Calu3 (cell line): ENCODE measurements at regions of chr9 and their contacts with region 1.

Region 1: GRCh38 chr9:124764774-124765438 is 6.2 kb downstream of the NR6A1 start:
- DNase-seq: no peak
- H3K4me3 Mint-ChIP-seq: no peak overlapping the region
- H3K27ac Mint-ChIP-seq: no peak overlapping the region
- H3K4me1 Mint-ChIP-seq: peaks cover 20% of the 10 kb centered on the region
- H3K27me3 Mint-ChIP-seq: no peaks in the 10 kb centered on the region
- CTCF ChIP-seq: no peak

Region 2: DNA sequence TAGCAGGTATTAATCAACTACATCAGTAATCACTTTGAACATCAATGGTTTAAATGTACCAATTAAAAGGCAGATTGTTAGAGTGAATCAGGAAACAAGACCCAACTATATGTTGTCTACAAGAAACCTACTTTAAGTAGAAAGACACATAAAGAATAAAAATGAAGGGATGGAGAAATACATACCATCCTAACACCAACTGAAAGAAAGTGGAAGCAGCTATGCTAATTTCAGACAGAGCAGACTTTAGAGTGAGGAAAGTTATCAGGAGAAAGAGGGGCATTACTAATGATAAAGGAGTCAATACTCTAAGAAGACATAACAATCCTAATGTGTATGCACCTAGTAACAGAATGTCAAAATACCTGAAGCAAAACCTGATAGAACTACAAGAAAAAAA is 119.6 kb before region 1 on chr9:
- CTCF ChIA-PET with region 1: no interaction called
- intact Hi-C with region 1: no loop called
- DNase-seq: no peak
- H3K4me3 Mint-ChIP-seq: no peak overlapping the region
- H3K27ac Mint-ChIP-seq: no peak overlapping the region
- H3K4me1 Mint-ChIP-seq: no peaks in the 10 kb centered on the region
- H3K27me3 Mint-ChIP-seq: no peaks in the 10 kb centered on the region
- CTCF ChIP-seq: no peak

Region 3: GRCh38 chr9:124733964-124734740 is 30.8 kb before region 1 on chr9:
- CTCF ChIA-PET with region 1: interaction called, 4 read pairs
- intact Hi-C with region 1: loop called (anchors 5 kb)
- DNase-seq: peak; percentile 55
- H3K4me3 Mint-ChIP-seq: peak overlapping the region; percentile 51
- H3K27ac Mint-ChIP-seq: peak overlapping the region; percentile 40
- H3K4me1 Mint-ChIP-seq: peaks cover 25% of the 10 kb centered on the region
- H3K27me3 Mint-ChIP-seq: no peaks in the 10 kb centered on the region
- CTCF ChIP-seq: no peak

Region 4: DNA sequence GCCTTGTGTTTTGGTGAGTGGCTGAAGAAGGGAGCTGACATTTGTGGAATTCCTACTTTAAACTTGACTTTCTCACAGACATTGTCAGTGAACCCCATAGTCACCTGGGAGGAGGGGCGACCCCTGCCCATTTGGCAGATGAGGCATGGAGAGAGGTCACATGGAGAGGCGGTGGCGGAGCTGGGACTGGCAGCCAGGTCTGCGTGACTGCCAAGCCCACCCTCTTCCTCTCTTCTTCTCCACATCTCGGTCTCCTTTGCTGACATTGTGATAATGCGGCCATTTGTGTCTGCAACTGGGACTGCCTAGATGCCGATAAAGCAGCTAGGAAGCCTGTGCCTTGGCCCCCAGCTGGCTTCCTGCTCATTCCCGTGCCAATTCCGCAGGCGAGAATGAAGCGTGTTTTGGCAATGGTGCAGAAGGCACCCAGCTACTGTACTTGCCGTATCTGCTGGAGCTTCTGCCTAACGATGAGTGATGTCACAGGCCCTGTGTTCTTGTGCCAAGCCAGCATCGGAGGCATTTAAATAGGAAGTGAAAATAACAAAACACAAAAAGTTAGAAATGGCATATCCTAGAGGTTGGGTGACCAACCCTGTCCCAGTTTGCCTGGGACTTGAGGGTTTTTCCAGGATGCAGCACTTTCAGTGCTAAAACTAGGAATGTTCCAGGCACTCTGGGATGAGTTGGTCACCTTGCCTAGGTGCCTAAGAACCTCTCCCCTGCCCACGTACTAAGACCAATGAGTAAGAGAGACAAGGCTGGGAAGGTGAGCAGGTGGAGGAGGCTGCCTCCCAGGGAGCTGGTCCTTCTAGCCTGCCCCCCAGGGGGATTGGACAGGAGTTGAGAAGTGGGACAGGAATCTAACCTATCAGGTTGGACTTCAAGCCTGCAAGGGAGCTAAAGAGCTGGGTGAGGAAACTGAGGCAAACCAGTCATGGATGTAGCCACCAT is 35.7 kb after region 1 on chr9:
- CTCF ChIA-PET with region 1: interaction called, 13 read pairs
- intact Hi-C with region 1: no loop called
- DNase-seq: no peak
- H3K4me3 Mint-ChIP-seq: no peak overlapping the region
- H3K27ac Mint-ChIP-seq: no peak overlapping the region
- H3K4me1 Mint-ChIP-seq: no peaks in the 10 kb centered on the region
- H3K27me3 Mint-ChIP-seq: no peaks in the 10 kb centered on the region
- CTCF ChIP-seq: no peak

Region 5: DNA sequence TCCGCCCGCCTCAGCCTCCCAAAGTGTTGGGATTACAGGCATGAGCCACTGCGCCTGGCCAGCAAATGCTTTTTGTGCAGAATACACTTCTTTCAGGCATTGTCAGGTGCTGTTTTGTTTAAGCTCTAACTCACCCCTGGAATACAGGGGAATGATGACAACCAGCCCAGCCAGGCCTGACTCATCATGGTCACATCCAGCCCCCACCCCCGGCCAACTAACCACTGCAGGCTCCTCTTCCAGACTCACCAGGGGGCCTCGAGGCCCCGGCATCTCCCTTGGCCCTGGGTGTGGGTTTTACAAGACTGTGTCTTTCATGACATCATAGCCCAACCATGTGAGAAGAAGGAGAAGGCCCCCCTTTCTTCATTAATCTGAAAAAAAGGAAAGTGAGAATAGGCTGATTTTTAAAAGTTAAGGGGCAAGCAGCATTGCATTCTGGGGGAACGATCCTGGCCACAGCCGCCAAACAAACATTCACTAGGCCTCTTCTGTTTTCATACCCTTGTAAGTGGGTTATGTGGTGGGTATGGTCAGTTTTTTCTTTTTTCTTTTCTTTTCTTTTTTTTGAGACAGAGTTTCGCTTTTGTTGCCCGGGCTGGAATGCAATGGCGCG is 47.6 kb after region 1 on chr9:
- CTCF ChIA-PET with region 1: no interaction called
- intact Hi-C with region 1: no loop called
- DNase-seq: peak; percentile 48
- H3K4me3 Mint-ChIP-seq: no peak overlapping the region
- H3K27ac Mint-ChIP-seq: no peak overlapping the region
- H3K4me1 Mint-ChIP-seq: peaks cover 25% of the 10 kb centered on the region
- H3K27me3 Mint-ChIP-seq: no peaks in the 10 kb centered on the region
- CTCF ChIP-seq: no peak

Region 6: DNA sequence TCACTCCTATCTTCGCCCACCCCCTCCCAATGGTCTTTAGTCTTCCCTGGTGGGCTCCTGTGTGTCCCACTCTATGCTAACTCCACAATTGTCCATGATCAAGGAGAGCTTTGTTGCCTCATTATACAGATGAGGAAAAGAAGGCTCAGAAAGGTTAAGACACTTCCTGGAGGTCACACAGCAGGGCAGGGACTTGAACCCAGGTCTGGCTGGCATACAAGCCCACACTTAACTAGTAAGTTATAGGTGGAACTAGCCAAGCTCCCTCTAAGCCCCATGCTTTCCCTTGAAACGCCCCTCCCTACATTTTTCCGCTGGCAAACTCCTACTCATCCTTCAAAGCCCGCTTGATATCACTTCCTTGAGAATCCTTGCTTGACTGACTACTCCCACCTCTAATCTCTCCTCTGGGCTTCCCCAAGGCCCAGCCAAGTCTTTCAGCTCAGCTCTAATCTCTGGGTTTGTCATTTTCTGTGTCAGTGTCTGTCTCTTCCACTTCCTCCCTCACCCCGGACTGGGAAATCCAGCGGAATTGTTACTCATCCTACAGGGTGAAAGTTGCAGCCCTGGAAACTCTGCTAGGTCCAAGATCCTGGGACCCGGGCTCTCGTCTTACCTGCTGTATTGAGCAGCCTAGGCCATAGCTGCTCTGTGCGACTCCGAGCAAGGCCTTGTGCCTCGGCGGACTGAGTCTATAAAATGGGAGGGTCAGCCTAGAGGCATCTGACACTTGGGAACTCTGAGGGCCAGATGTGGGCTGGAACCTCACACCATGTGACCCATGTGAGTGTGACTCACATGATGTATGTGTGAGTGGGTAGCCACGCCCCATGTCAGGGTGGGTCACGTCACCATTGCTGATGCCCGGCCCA is 641.3 kb after region 1 on chr9:
- CTCF ChIA-PET with region 1: no interaction called
- intact Hi-C with region 1: no loop called
- DNase-seq: peak; percentile 16
- H3K4me3 Mint-ChIP-seq: no peak overlapping the region
- H3K27ac Mint-ChIP-seq: peak overlapping the region; percentile 70
- H3K4me1 Mint-ChIP-seq: peaks cover 28% of the 10 kb centered on the region
- H3K27me3 Mint-ChIP-seq: peaks cover 23% of the 10 kb centered on the region
- CTCF ChIP-seq: no peak